CD4-positive, alpha-beta memory T cell (primary cell): ENCODE measurements at regions of chr2 and their contacts with region 1.

Region 1: GRCh38 chr2:134918526-134919340 is at the start of gene CCNT2:
- DNase-seq: peak; percentile 99 to 100 (median 100)
- H3K4me3 ChIP-seq: peak within 1 kb of the TSS; percentile 68 to 94
- H3K4me3 Mint-ChIP-seq: peak within 1 kb of the TSS; percentile 90 to 99 (median 97)
- H3K27ac ChIP-seq: peak within 1 kb of the TSS; percentile 95
- H3K27ac Mint-ChIP-seq: peak within 1 kb of the TSS; percentile 93 to 99 (median 98)
- H3K4me1 ChIP-seq: peaks cover 52% of the 10 kb centered on the region
- H3K4me1 Mint-ChIP-seq: peaks cover 22 to 61% (median 43%) of the 10 kb centered on the region in 4 donors
- H3K27me3 ChIP-seq: no peaks in the 10 kb centered on the region
- H3K27me3 Mint-ChIP-seq: peaks cover 0 to 4% of the 10 kb centered on the region in 2 donors
- total RNA-seq, gene CCNT2: 75.4 to 80.6 TPM

Region 2: GRCh38 chr2:135741395-135742324 is 822.9 kb after region 1 on chr2 and contains the start of gene UBXN4:
- CTCF ChIA-PET with region 1: no interaction called
- POLR2A ChIA-PET with region 1: interaction called, 21 read pairs
- intact Hi-C with region 1: loop called (anchors 1 kb)
- DNase-seq: peak; percentile 88 to 97 (median 91)
- H3K4me3 ChIP-seq: peak within 1 kb of the TSS; percentile 53 to 80
- H3K4me3 Mint-ChIP-seq: peak within 1 kb of the TSS; percentile 94 to 99 (median 97)
- H3K27ac ChIP-seq: peak within 1 kb of the TSS; percentile 97
- H3K27ac Mint-ChIP-seq: peak within 1 kb of the TSS in 6 of 7 donors; percentile 96 to 99 (median 97)
- H3K4me1 ChIP-seq: peaks cover 40% of the 10 kb centered on the region
- H3K4me1 Mint-ChIP-seq: peaks cover 29 to 43% (median 37%) of the 10 kb centered on the region in 4 donors
- H3K27me3 ChIP-seq: no peaks in the 10 kb centered on the region
- H3K27me3 Mint-ChIP-seq: no peaks in the 10 kb centered on the region
- total RNA-seq, gene UBXN4: 116 to 121 TPM

Region 3: DNA sequence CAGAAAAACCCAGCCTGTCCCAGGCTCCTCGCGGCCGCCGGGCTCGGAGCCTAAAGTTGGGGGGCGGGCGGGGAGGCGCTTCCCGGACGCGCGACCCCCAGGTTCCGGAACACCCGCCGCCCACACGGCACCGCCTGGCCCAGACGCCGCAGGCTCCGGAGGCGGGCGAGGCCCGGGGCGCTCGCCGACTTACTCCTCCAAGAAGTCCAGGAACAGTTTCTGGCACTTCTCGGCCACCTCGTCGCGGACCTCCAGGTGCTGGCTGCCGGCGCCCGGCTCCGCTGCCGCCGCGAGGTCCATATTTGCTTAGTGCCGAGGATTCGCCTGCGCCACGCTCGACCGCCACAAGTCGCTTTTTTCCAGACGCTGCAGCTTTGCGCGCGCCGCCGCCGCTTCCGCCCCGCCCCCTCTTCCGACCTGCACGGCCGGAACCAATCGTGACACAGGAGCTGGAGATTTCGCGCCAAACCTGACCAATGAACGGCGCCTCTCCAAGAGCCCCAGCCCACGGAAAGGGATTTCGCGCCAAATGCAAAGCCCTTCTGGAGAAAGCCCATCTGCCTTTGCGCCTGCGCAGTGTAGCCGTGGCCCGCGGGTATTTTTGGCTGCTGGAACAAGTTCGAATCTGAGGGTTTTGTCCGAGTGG is 957.5 kb after region 1 on chr2 and contains the start of gene MCM6:
- CTCF ChIA-PET with region 1: no interaction called
- POLR2A ChIA-PET with region 1: interaction called, 4 read pairs
- intact Hi-C with region 1: loop called (anchors 1 kb)
- DNase-seq: peak; percentile 97 to 98 (median 98)
- H3K4me3 ChIP-seq: peak within 1 kb of the TSS; percentile 82 to 84
- H3K4me3 Mint-ChIP-seq: peak within 1 kb of the TSS; percentile 81 to 96 (median 95)
- H3K27ac ChIP-seq: peak within 1 kb of the TSS; percentile 80
- H3K27ac Mint-ChIP-seq: peak within 1 kb of the TSS; percentile 94 to 97 (median 95)
- H3K4me1 ChIP-seq: peaks cover 31% of the 10 kb centered on the region
- H3K4me1 Mint-ChIP-seq: peaks cover 27 to 47% (median 37%) of the 10 kb centered on the region in 4 donors
- H3K27me3 ChIP-seq: no peaks in the 10 kb centered on the region
- H3K27me3 Mint-ChIP-seq: peaks cover 0 to 1% of the 10 kb centered on the region in 2 donors
- total RNA-seq, gene MCM6: 31.2 to 32.7 TPM